ENCODE measurements at regions of chr11 and their contacts with region 1.

Region 1: DNA sequence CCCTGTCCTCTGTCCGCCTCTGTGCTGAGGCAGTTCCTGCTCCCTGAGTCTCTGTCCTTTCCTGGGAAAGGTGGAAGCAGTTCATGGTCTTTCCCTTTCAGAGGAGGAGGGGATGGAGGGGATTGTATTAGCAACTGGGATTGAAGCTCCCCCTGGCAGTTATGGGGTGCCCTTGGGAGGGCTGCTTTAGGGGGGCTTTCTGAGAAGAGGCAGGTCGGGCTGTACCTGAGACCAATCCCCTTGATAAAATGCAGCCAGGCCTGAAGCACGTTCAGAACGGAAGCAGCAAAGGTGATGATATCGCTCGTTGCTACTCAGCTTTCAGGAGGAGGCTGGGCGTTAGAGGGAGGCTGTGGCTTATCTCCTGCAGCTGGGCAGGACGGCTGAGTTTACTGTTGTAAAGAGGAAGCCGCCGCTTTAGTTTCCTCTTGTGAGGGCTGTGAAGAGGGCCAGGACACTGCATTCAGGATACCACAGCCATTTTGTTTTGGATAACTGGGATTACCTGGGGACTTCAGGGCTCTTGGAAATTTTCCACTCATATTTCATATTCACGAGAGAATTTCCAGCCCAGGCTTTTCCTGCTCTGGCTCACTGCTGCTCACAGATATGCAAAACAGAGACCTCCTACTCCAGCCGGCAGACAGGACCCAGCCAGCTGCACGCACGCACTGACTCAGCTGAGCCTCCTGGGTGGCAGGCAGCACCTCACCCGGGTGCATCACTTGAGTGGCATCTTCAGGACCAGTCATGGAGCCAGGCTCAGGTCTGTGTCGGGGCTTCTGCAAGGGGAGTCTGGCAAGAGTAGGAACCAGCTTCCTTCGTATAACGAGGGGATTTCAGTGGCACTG is 798 bp downstream of the AMPD3 start:
- DNase-seq: peak; percentile 61
- H3K4me3 ChIP-seq: peak overlapping the region; percentile 66
- H3K27ac ChIP-seq: peak overlapping the region; percentile 98
- H3K27me3 ChIP-seq: no peaks in the 10 kb centered on the region
- CTCF ChIP-seq: no peak

Region 2: DNA sequence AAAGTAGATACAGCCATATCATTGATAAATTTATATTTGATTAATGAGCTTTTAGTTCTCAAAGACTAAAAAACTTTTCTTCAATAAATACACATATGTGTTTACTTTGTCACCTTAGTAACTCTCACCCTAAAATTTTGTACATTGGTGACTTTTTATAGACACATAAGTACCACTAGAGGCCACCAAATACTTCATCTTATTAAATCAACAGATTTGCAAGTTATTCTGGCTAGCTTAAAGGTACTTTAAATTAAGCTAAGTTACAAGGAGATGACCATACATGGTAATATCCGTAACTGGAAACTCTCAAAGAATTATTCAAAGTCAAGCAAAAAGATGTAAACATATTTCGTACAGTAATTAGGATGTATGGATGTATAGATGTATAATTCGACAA is 274.1 kb before region 1 on chr11:
- CTCF ChIA-PET with region 1: no interaction called
- POLR2A ChIA-PET with region 1: no interaction called
- DNase-seq: no peak
- H3K4me3 ChIP-seq: no peak overlapping the region
- H3K27ac ChIP-seq: no peak overlapping the region
- H3K27me3 ChIP-seq: no peaks in the 10 kb centered on the region
- CTCF ChIP-seq: peak; percentile 19; the same call in 1 of the 2 replicates

Region 3: GRCh38 chr11:10233581-10233980 is 222.3 kb before region 1 on chr11:
- CTCF ChIA-PET with region 1: no interaction called
- POLR2A ChIA-PET with region 1: no interaction called
- DNase-seq: peak; percentile 61
- H3K4me3 ChIP-seq: no peak overlapping the region
- H3K27ac ChIP-seq: peak overlapping the region; percentile 62
- H3K27me3 ChIP-seq: no peaks in the 10 kb centered on the region
- CTCF ChIP-seq: no peak

Region 4: DNA sequence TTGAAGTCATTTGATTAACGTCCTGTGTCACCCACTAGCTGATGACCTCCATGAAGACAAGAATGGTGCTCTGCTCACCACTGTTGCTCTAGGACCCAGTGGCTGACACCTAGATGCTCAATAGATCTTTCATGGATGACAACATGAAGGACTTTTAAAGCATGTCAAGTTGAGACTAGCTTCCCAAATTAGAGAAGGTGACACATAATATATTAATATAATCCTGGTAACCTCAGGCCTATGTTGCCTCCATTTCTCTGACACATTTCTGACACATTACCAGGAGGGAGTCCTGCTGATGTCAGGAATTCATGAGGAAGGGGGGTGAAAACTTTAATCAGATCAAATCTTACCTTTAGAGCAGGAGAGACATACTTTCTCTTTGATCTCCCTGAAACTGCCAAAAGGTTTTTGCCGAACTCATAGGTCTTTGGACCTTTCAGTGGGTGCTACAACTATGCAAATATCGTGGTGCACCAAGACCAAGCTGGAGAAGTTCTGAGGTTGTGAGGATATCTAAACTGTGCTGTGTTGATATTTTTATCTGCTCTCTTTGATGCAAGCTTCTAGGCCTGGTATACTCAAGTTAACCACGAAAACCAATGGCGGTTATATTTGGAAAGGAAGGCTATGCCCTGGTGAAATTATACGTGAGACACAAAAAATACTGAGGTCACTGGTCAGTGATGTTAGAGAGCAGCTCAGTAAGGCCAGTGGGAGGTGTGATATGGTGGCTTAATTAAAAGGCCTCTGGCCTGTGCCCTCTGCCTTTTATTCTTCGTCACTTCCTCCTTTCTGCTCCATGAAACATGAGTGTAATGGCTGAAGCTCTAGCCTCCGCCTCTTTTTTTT is 14.0 kb before region 1 on chr11:
- CTCF ChIA-PET with region 1: no interaction called
- POLR2A ChIA-PET with region 1: interaction called, 11 read pairs
- DNase-seq: no peak
- H3K4me3 ChIP-seq: no peak overlapping the region
- H3K27ac ChIP-seq: no peak overlapping the region
- H3K27me3 ChIP-seq: no peaks in the 10 kb centered on the region
- CTCF ChIP-seq: no peak

Region 5: GRCh38 chr11:10490398-10491241 is 34.8 kb after region 1 on chr11:
- CTCF ChIA-PET with region 1: no interaction called
- POLR2A ChIA-PET with region 1: interaction called, 10 read pairs
- DNase-seq: peak; percentile 92
- H3K4me3 ChIP-seq: no peak overlapping the region
- H3K27ac ChIP-seq: peak overlapping the region; percentile 95
- H3K27me3 ChIP-seq: no peaks in the 10 kb centered on the region
- CTCF ChIP-seq: no peak

Region 6: DNA sequence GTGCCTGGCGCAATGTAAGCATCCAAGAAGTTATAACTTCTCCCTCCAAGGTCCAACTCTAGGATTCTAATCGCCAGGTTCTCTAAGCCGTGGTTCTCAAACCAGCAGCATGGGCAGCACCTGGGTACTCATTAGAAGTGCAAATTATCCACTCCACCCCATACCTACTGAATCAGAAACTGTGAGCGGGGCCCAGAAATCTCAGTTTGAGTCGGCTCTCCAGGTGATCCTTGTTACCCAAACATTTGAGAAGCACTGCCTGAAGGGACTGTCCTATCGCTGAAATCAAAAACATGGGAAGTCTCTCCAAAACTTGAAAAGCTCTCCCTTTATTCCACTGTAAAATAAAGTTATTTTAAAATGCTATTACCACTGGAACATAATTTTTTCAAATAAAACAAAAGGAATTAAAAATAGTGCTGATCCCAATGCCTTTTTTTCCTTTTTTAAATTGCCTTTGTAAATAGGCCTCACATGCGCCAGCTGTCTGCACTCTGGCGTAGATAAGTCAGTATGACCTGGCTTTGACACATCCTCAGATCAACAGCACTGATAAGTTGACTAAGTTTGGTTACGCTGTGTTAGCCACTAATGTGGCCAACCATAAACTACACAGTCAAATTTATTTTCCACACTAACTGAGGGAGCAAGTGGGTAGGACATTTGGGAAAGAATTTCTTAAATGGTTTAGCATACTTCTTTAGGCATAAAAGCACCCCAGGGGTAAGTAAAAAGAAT is 286.8 kb after region 1 on chr11:
- CTCF ChIA-PET with region 1: no interaction called
- POLR2A ChIA-PET with region 1: no interaction called
- DNase-seq: no peak
- H3K4me3 ChIP-seq: no peak overlapping the region
- H3K27ac ChIP-seq: no peak overlapping the region
- H3K27me3 ChIP-seq: no peaks in the 10 kb centered on the region
- CTCF ChIP-seq: no peak

Measured in AG04450 (cell line).